Sciatic nerve (tissue), 2 donors: ENCODE measurements at regions of chr11 and their contacts with region 1.

Region 1: GRCh38 chr11:61477727-61478148 is 30.8 kb upstream of the LRRC10B start:
- DNase-seq: peak; percentile 79
- ATAC-seq: no peak

Region 2: DNA sequence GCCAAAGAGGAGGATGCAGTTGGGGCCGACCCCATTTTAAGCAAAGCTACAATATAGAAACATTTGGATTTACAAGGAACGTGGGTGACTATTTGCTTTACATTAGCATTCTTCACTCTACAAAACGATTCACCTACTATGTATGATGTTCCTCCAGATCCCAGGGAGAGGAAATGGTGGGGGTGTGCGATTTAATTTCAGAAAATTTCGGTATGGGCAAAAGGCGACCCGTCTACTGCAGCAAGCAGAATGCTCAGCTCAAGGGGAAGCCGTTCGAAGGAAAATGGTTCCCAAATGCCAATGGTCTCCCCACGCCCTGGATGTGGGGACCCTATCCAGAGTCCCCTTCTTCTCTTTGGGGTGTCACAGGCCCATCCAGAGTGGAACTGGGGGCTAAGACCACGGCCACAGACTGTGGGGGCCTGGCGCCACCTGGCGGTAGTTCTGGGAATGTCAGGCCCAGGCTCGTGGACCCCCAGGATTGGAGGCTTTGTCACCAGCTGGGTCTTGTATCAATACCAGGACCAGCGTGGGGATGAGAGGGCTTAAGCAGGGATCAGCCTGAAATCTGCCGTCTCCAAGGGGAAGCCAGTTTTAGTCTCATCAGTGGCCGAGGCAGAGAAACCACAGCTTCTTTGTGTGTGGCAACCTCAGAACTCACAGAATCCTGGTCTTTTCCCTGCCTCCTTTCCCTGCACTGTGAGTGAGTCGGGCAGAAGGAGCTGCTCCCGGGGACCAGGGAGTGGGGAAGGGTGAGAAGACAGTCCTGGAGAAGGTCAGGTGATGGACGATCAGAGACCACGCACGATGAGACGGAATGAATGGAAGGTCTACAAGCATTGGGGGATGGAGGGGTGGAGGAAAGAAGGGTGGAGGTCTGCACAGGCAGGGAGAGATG is 39.2 kb after region 1 on chr11:
- intact Hi-C with region 1: loop called (anchors 2 kb)
- DNase-seq: no peak
- ATAC-seq: peak; percentile 67

Region 3: GRCh38 chr11:61639816-61640443 is 162.2 kb after region 1 on chr11:
- intact Hi-C with region 1: loop called (anchors 10 kb)
- DNase-seq: no peak
- ATAC-seq: no peak

Region 4: GRCh38 chr11:61742393-61742792 is 264.7 kb after region 1 on chr11:
- intact Hi-C with region 1: loop called (anchors 5 kb)
- DNase-seq: no peak
- ATAC-seq: no peak